ENCODE measurements at regions of chr17 and their contacts with region 1.

Region 1: GRCh38 chr17:57783106-57783742 is 38.1 kb upstream of the CCDC182 start:
- DNase-seq: peak; percentile 80 to 90 (median 90)
- H3K4me3 ChIP-seq: peak overlapping the region in 3 of 7 experiments; percentile 2 to 60 (median 2)
- H3K27ac ChIP-seq: no peak overlapping the region
- H3K4me1 ChIP-seq: peaks cover 0 to 28% (median 21%) of the 10 kb centered on the region in 4 experiments
- H3K27me3 ChIP-seq: peaks cover 0 to 2% (median 0%) of the 10 kb centered on the region in 5 experiments

Region 2: DNA sequence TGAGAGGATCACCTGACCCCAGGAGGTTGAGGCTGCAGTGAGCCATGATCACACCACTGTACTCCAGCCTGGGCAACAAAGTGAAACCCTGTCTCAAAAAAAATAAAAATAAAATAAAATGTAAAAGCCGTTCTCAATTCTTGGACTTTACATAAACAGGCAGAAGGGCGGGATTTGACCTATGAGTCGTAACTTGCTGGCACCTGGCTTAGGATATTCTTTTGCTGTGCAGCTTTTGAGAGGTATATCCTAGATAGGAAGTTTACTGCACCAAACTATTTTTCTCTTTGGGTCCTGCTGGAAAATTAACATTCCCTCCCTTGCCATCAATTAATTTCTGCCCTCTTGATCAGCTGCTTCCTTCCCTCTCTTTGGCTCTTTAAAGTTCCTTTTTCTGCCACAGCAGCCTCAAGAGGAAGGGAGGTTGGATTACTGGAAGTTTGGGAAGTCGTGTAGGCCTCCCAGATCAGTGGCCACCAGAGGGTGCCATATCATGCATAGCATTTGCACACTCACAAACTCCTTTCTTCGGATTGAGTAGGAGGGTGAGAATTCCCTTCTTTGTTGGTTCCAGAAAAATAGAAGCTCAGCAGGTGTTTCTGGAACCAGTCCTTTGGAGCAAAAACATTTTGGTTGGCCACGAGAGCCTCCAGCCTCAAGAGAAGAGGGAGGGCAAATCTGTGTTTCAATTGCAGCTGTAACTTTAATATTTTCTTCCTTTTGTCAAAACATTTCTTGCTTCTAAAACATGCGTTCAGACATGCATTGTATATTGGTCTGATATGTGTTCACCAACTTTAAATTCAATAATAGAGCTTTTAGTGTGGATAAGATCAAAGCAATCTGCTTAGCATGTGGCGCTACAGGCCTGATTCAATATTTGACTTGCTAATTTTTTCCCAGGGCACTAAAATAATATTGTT is 185.4 kb before region 1 on chr17:
- CTCF ChIA-PET with region 1: interaction called, 11 read pairs
- POLR2A ChIA-PET with region 1: no interaction called
- DNase-seq: peak in 2 of 3 donors; percentile 42 to 44
- H3K4me3 ChIP-seq: peak overlapping the region in 1 of 7 experiments; percentile 8
- H3K27ac ChIP-seq: no peak overlapping the region
- H3K4me1 ChIP-seq: peaks cover 23 to 59% (median 57%) of the 10 kb centered on the region in 4 experiments
- H3K27me3 ChIP-seq: no peaks in the 10 kb centered on the region

Region 3: DNA sequence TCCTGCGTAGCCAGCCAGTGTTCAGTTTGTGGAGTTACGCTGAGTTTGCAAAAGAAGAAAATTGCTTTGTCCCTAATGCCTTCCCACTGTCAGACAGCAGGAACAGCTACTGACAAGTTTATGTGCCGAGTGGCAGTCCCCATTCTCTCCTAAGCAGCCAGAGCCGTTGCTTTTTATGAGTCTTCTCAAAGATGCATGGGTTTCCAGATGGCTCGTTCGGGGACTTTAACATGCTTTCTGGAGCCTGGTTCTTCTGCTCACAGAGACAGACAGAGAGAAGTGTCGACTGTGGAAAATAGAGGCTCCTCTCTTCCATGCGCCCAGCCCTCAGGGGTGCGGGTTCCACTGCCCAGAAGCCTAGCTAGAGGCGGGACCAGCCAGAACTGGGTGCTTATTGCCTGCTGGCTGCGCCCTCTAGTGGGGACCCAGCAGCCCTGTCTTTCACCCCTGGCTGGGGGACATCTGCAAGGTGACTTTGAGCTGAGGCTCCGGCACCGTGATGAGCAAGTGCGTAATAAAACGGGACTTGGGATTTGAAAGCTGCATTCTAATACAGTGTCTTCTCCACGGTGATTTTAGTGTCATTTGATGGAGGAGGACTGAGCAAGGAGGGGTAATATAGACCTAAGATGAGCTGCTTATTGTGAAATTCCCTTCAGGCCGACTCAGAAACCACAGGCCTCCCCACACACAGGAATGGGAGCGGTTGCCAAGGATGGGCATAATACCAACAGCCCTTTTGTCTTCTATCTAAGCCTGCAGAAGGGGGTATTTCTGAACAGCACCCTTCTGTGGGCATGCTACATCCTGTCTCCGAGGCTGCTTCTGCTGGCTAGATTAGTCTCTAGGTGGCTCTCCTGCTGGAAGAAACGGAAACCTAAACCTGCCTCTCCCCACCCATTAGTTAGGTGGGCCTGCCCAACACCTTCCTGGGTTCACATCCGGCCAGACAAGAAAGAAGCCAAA is 111.3 kb before region 1 on chr17:
- CTCF ChIA-PET with region 1: interaction called, 18 read pairs
- POLR2A ChIA-PET with region 1: no interaction called
- DNase-seq: peak; percentile 71 to 85 (median 83)
- H3K4me3 ChIP-seq: no peak overlapping the region
- H3K27ac ChIP-seq: no peak overlapping the region
- H3K4me1 ChIP-seq: peaks cover 0 to 28% (median 10%) of the 10 kb centered on the region in 4 experiments
- H3K27me3 ChIP-seq: no peaks in the 10 kb centered on the region

Region 4: DNA sequence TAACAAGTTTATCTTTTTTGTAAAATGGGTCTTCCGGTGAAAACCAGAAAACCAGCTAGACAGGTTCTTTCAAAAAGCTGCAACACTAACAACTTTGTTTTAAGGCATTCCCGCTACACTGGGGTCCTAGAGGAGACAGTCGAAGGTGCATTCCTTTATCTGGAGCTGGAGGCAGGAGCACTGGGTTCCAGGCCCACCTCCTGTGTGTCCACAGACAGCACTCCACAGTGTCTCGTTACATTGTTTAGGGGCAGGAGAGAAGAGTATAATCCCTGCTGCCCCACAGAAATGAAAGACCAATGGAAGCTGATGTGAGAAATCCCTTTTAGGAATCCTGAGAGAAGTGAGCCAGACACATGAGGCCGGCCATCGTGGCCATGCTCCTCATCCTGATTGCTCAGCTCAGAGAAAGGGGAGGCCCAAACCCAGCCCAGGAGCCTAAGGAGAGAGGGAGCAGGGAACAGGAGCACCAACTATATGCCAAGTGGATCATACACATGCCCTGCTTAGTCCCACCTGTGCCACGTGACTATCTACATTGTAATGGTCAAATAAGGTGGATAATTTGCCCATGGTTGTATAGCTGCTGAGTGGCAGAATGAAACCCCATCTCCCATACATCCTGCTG is 97.6 kb before region 1 on chr17:
- CTCF ChIA-PET with region 1: no interaction called
- POLR2A ChIA-PET with region 1: no interaction called
- DNase-seq: no peak
- H3K4me3 ChIP-seq: no peak overlapping the region
- H3K27ac ChIP-seq: no peak overlapping the region
- H3K4me1 ChIP-seq: no peaks in the 10 kb centered on the region
- H3K27me3 ChIP-seq: no peaks in the 10 kb centered on the region

Region 5: GRCh38 chr17:57772774-57773173 is 10.4 kb before region 1 on chr17:
- CTCF ChIA-PET with region 1: interaction called, 17 read pairs
- POLR2A ChIA-PET with region 1: interaction called, 4 read pairs
- DNase-seq: no peak
- H3K4me3 ChIP-seq: no peak overlapping the region
- H3K27ac ChIP-seq: no peak overlapping the region
- H3K4me1 ChIP-seq: peaks cover 11 to 18% (median 12%) of the 10 kb centered on the region in 4 experiments
- H3K27me3 ChIP-seq: no peaks in the 10 kb centered on the region

Region 6: DNA sequence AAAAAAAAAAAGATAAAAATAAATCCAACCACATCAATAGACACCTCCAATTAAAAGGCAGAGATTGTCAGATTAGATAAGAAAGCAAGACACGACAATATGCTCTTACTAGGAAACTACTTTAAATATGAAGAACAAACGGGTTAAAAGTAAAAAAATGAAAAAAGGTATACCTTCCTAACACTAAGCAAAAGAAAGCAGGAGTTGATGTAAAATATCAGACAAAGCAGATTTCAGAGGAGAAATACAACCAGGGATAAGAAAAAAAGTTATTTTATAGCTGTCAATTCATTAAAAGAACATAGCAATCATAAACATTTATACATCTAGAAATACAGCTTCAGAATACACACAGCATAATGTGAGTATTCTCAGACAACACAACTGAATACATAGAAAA is 11.6 kb after region 1 on chr17:
- CTCF ChIA-PET with region 1: interaction called, 17 read pairs
- POLR2A ChIA-PET with region 1: no interaction called
- DNase-seq: no peak
- H3K4me3 ChIP-seq: no peak overlapping the region
- H3K27ac ChIP-seq: no peak overlapping the region
- H3K4me1 ChIP-seq: no peaks in the 10 kb centered on the region
- H3K27me3 ChIP-seq: peaks cover 0 to 2% (median 0%) of the 10 kb centered on the region in 5 experiments

Region 7: GRCh38 chr17:57810721-57811637 is 27.8 kb after region 1 on chr17:
- CTCF ChIA-PET with region 1: interaction called, 11 read pairs
- POLR2A ChIA-PET with region 1: no interaction called
- DNase-seq: peak; percentile 80 to 94 (median 90)
- H3K4me3 ChIP-seq: peak overlapping the region in 5 of 7 experiments; percentile 19 to 59 (median 43)
- H3K27ac ChIP-seq: peak overlapping the region in 1 of 2 experiments; percentile 6
- H3K4me1 ChIP-seq: peaks cover 0 to 31% (median 18%) of the 10 kb centered on the region in 4 experiments
- H3K27me3 ChIP-seq: peaks cover 0 to 11% (median 2%) of the 10 kb centered on the region in 5 experiments

Region 8: DNA sequence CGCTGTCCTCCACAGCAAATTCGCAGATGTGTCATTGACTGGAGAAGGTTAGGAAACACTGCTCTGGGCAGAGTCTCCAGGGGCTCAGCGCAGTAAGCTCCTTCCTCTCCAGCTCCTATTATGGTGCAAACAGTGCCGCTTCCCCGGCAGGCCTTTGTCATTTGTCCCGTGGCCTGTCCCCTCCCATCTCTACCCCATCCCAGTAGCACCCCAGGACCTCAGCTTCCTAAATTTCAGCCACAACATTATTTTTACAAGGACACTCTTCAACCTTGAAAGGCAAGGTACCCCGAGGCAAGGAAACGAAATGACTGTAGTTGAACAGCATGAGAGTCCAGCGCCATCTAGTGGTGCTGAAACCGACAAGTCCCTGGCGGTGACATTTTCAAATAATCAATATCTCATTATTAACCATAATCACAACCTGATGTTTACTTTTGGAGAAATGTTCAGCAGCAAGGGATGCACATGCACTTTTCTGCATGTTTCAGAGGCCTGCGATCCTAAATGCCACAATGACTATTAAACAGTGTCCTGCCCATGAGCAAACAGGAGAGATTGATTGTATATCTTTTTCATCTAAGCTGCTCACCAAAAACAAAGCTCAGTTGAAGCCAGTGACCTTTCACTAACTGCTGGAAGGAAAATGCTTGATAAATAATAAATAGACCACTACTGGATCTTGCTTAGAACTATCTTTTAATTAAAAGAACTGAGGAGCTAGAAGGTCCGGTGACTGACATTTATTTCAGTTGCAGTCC is 50.1 kb after region 1 on chr17:
- CTCF ChIA-PET with region 1: interaction called, 18 read pairs
- POLR2A ChIA-PET with region 1: no interaction called
- DNase-seq: peak; percentile 70 to 79 (median 78)
- H3K4me3 ChIP-seq: peak overlapping the region; percentile 15 to 74 (median 62)
- H3K27ac ChIP-seq: no peak overlapping the region
- H3K4me1 ChIP-seq: peaks cover 5 to 14% (median 10%) of the 10 kb centered on the region in 4 experiments
- H3K27me3 ChIP-seq: no peaks in the 10 kb centered on the region